ENCODE measurements at regions of chr18 and their contacts with region 1.

Region 1: DNA sequence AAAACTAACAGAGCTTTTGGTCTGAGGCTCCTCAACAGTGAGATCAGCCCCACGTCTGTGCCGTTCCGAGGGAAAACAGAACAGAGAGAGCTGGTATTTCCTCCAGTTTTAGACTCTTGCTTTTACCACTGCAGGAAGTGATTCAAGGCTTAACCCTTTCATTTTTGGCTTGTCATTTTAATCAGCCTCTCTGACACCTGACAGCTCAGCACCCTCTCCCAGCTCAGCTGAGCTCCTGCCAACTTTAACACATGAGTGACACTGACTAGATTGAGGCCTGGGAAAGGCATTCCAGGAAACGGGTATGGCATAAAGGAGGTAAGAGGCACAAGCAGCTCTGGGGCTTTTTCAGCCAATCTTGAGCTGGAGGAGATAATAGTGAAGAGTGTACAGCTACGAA is 239.4 kb upstream of the SKOR2 start:
- DNase-seq: no peak

Region 2: GRCh38 chr18:47558110-47558750 is 67.3 kb after region 1 on chr18:
- intact Hi-C with region 1: loop called (anchors 10 kb)
- DNase-seq: no peak

Region 3: GRCh38 chr18:47669815-47670214 is 178.9 kb after region 1 on chr18:
- intact Hi-C with region 1: no loop called
- DNase-seq: no peak

Measured in posterior cingulate gyrus (tissue), 11 donors.